ENCODE measurements at regions of chr11 and their contacts with region 1.

Region 1: DNA sequence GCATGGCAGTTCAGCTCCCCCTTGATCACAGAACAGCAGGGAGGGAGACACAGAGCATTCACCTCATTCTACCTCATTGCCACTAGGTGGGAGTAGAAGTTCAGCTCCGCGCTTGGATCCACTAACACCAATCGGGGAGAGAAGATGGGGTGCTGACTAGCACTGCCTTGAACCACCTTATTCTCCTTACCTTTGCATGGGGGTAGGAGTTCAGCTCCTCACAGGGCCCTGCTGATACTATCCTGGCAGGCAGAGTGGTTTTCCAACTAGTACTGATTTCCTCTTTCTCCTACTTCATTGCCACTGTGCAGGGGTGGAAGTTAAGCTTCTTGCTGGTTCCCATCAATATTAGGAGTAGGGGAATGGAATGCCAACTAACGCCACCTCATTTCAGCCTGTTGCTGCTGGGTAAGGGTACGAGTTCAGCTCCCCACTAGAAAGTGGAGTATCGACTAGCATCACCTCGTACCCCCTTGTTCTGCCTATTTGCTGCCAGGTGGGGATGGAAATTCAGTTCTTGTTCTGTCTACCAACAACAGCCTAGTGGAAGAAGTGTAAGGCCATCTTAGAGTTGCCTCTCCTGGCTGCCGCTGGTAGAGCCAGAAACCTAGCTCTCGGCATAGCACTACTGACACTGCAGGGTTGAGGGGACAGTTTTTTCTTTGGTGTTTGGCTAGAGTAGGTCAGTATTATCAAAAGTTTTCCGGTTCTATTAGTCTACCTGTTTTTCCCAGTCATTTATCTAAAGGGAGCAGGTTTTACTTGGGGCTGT is 550.9 kb upstream of the CCDC90B start:
- DNase-seq: peak; percentile 44 to 78 (median 56)
- H3K4me3 ChIP-seq: no peak overlapping the region
- H3K27ac ChIP-seq: no peak overlapping the region
- H3K4me1 ChIP-seq: peaks cover 0 to 21% of the 10 kb centered on the region in 2 donors
- H3K27me3 ChIP-seq: no peaks in the 10 kb centered on the region
- CTCF ChIP-seq: peak; percentile 61 to 79 (median 68)
- POLR2A ChIP-seq: no peak

Region 2: GRCh38 chr11:84261707-84262106 is 424.6 kb after region 1 on chr11:
- intact Hi-C with region 1: loop called in 1 of 2 experiments (anchors 5 kb)
- DNase-seq: peak in 5 of 7 donors; percentile 15 to 65 (median 39)
- H3K4me3 ChIP-seq: no peak overlapping the region
- H3K27ac ChIP-seq: no peak overlapping the region
- H3K4me1 ChIP-seq: no peaks in the 10 kb centered on the region
- H3K27me3 ChIP-seq: no peaks in the 10 kb centered on the region
- CTCF ChIP-seq: peak in 4 of 6 experiments; percentile 27 to 43 (median 32)
- POLR2A ChIP-seq: no peak

Region 3: GRCh38 chr11:84524422-84525051 is 687.5 kb after region 1 on chr11:
- intact Hi-C with region 1: loop called in 1 of 2 experiments (anchors 10 kb)
- DNase-seq: no peak
- H3K4me3 ChIP-seq: no peak overlapping the region
- H3K27ac ChIP-seq: peak overlapping the region in 1 of 5 donors; percentile 55
- H3K4me1 ChIP-seq: peaks cover 4 to 9% of the 10 kb centered on the region in 2 donors
- H3K27me3 ChIP-seq: no peaks in the 10 kb centered on the region
- CTCF ChIP-seq: peak; percentile 58 to 82 (median 63)
- POLR2A ChIP-seq: no peak